Naive thymus-derived CD4-positive, alpha-beta T cell (primary cell): ENCODE measurements at regions of chr11 and their contacts with region 1.

Region 1: DNA sequence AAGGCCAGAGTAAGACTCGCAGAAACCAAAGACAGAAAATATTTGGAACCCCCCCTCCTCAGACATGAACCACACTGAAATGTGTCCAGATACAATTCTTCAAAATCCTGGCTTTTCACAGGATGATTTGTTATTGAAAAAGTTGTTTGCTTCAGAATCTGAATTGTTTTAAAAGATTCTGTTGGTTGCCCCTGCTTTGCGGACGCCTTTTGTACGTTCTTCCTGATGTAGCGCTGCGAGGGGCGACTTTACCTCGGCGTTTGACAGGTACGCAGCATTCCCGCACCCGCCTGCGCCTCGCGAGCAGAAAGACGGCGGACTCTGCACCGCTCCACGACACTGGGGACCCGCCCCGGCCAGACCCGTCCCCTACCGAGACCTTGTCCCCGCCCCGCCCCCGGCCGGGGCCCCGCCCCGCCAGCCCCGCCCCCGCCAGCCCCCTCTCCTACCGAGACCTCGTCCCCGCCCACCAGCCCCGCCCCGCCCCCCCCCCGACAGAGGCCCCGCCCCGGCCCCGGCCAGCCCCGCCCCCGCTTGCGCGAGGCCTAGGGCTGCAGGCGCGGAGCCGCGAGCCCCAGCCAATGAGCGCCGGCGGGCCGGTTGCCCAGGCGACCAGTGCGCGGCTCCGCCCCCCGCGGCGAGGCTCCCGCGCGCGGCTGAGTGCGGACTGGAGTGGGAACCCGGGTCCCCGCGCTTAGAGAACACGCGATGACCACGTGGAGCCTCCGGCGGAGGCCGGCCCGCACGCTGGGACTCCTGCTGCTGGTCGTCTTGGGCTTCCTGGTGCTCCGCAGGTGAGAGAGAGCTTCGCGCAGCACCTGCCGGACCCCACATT is at the start of gene GLB1L2:
- DNase-seq: peak; percentile 68 to 88 (median 78)
- ATAC-seq: peak; percentile 96
- H3K4me3 ChIP-seq: peak within 1 kb of the TSS; percentile 66
- H3K4me3 Mint-ChIP-seq: peak within 1 kb of the TSS; percentile 84 to 94 (median 88)
- H3K27ac ChIP-seq: no peak within 1 kb of the TSS
- H3K27ac Mint-ChIP-seq: peak within 1 kb of the TSS in 7 of 9 donors; percentile 25 to 89 (median 66)
- H3K4me1 ChIP-seq: peaks cover 7 to 9% of the 10 kb centered on the region in 2 donors
- H3K4me1 Mint-ChIP-seq: peaks cover 3 to 19% (median 17%) of the 10 kb centered on the region in 7 donors
- H3K27me3 ChIP-seq: no peaks in the 10 kb centered on the region
- H3K27me3 Mint-ChIP-seq: peaks cover 5 to 60% (median 9%) of the 10 kb centered on the region in 5 donors
- total RNA-seq, gene GLB1L2: 0.34 to 2.4 (median 1.7) TPM

Region 2: GRCh38 chr11:133956650-133957633 is 374.6 kb before region 1 on chr11 and contains the start of gene IGSF9B:
- CTCF ChIA-PET with region 1: no interaction called
- POLR2A ChIA-PET with region 1: no interaction called
- intact Hi-C with region 1: loop called in 1 of 2 experiments (anchors 5 kb)
- DNase-seq: peak; percentile 87 to 97 (median 92)
- ATAC-seq: peak; percentile 97
- H3K4me3 ChIP-seq: peak within 1 kb of the TSS; percentile 99
- H3K4me3 Mint-ChIP-seq: peak within 1 kb of the TSS; percentile 89 to 96 (median 92)
- H3K27ac ChIP-seq: peak within 1 kb of the TSS; percentile 75
- H3K27ac Mint-ChIP-seq: peak within 1 kb of the TSS; percentile 48 to 91 (median 88)
- H3K4me1 ChIP-seq: peaks cover 11 to 27% of the 10 kb centered on the region in 2 donors
- H3K4me1 Mint-ChIP-seq: peaks cover 29 to 52% (median 43%) of the 10 kb centered on the region in 7 donors
- H3K27me3 ChIP-seq: no peaks in the 10 kb centered on the region
- H3K27me3 Mint-ChIP-seq: peaks cover 7 to 24% (median 16%) of the 10 kb centered on the region in 5 donors
- total RNA-seq, gene IGSF9B: 17.6 to 155 (median 24.1) TPM

Region 3: DNA sequence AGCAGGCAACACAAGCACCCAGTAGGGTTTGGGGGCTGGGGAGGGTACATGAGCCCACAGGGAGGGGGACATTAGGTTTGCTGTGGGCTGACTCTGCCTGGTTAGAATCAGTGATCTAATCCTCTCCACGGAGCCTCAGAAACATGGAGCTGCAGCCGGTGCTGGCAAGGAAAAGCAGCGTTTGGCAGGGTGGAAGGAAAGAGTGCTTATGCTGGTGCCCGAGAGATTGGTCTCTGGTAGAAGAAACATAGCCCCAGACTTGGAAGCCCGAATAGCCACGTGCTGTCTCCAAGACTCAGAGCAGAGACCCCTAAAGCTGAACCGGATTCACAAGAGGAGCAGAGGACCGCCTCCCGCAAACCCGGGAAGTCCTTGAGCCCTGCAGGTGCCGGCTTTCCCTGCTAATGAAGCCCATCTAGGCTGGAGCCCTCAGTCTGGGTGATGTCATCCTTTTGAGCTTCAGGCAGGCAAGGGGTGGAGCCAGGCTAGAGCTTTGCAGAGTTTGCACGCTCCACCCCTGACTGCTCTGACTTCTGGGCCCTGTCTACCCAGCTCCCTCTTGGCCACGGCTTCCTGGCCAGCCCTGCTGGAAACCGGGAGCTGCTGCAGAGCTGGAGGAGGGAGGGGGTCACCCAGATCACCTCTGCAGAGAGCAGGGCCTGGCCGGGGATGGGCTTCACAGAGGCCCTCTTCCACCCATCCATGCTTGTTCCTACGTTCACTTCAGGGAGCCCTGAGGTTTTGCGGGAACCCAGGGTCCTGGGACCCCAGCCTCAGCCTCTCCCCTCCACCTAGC is 297.7 kb before region 1 on chr11:
- CTCF ChIA-PET with region 1: no interaction called
- POLR2A ChIA-PET with region 1: no interaction called
- intact Hi-C with region 1: loop called (anchors 2 to 5 kb)
- DNase-seq: peak in 8 of 9 donors; percentile 38 to 74 (median 60)
- ATAC-seq: peak; percentile 77
- H3K4me3 ChIP-seq: peak overlapping the region; percentile 25
- H3K4me3 Mint-ChIP-seq: peak overlapping the region; percentile 63 to 95 (median 75)
- H3K27ac ChIP-seq: peak overlapping the region; percentile 67
- H3K27ac Mint-ChIP-seq: peak overlapping the region; percentile 74 to 98 (median 85)
- H3K4me1 ChIP-seq: peaks cover 29 to 46% of the 10 kb centered on the region in 2 donors
- H3K4me1 Mint-ChIP-seq: peaks cover 33 to 79% (median 65%) of the 10 kb centered on the region in 7 donors
- H3K27me3 ChIP-seq: no peaks in the 10 kb centered on the region
- H3K27me3 Mint-ChIP-seq: peaks cover 0 to 24% (median 0%) of the 10 kb centered on the region in 5 donors

Region 4: DNA sequence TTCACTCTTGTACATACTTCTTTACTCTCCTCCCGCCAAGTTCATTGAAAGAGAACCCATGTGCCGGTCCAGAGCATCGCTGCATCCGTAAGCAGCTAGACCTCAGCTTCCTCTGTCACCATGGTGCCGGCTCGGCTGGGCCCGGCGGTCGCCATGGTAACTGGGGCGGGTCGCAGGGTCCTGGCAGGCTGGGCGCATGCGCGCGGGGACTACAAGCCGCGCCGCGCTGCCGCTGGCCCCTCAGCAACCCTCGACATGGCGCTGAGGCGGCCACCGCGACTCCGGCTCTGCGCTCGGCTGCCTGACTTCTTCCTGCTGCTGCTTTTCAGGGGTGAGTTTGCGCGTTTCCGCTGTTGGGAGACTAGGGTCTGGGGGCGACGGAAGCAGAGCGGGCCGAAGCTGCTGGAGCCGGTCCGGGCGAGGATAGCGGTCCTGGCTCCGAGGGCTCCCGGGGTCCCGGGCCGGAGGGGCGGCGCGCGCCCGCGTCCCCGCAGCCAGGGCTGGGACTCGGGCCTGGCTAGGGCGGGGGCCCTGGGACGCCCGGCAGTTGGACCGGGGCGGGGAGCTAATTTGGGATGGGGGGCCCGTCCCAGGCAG is 262.6 kb before region 1 on chr11 and contains the start of gene JAM3:
- CTCF ChIA-PET with region 1: no interaction called
- POLR2A ChIA-PET with region 1: no interaction called
- intact Hi-C with region 1: loop called in 1 of 2 experiments (anchors 2 kb)
- DNase-seq: peak; percentile 95 to 97 (median 96)
- ATAC-seq: peak; percentile 95
- H3K4me3 ChIP-seq: peak within 1 kb of the TSS; percentile 71
- H3K4me3 Mint-ChIP-seq: peak within 1 kb of the TSS; percentile 84 to 97 (median 92)
- H3K27ac ChIP-seq: peak within 1 kb of the TSS; percentile 71
- H3K27ac Mint-ChIP-seq: peak within 1 kb of the TSS; percentile 59 to 96 (median 89)
- H3K4me1 ChIP-seq: peaks cover 6% of the 10 kb centered on the region in 2 donors
- H3K4me1 Mint-ChIP-seq: peaks cover 5 to 22% (median 13%) of the 10 kb centered on the region in 7 donors
- H3K27me3 ChIP-seq: no peaks in the 10 kb centered on the region
- H3K27me3 Mint-ChIP-seq: peaks cover 0 to 80% (median 6%) of the 10 kb centered on the region in 5 donors
- total RNA-seq, gene JAM3: 4.8 to 8.2 (median 6.3) TPM

Region 5: DNA sequence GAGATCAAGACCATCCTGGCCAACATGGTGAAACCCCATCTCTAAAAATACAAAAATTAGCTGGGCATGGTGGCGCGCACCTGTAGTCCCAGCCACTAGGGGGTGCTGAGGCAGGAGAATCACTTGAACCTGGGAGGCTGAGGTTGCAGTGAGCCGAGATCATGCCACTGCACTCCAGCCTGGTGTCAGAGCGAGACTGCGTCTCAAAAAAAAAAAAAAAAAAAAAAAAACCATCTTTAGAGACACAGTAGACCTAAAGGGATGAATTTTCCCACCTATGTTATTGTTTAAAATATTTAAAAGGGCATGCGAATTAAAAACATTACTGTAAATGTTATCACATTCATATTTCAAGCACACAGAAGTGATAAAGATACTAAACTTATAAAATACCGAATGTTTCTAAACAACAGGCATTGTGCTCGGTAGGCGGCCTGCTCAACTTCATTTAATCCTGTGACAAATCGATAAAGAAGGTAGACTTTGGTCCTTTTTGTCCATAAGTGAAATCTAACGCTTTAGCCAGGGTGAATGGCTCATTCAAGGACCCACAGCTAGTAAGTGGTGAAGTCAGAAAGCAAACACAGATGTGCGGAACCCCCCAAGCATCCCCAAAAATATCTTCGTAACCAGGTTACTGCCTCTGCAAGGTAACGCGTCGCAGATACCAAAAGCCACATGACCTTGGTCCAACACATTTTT is 123.9 kb before region 1 on chr11:
- CTCF ChIA-PET with region 1: no interaction called
- POLR2A ChIA-PET with region 1: no interaction called
- intact Hi-C with region 1: loop called in 1 of 2 experiments (anchors 5 kb)
- DNase-seq: peak; percentile 36 to 67 (median 62)
- ATAC-seq: no peak
- H3K4me3 ChIP-seq: no peak overlapping the region
- H3K4me3 Mint-ChIP-seq: peak overlapping the region in 1 of 10 donors; percentile 34
- H3K27ac ChIP-seq: no peak overlapping the region
- H3K27ac Mint-ChIP-seq: no peak overlapping the region
- H3K4me1 ChIP-seq: no peaks in the 10 kb centered on the region
- H3K4me1 Mint-ChIP-seq: peaks cover 2 to 14% (median 7%) of the 10 kb centered on the region in 7 donors
- H3K27me3 ChIP-seq: no peaks in the 10 kb centered on the region
- H3K27me3 Mint-ChIP-seq: no peaks in the 10 kb centered on the region

Region 6: DNA sequence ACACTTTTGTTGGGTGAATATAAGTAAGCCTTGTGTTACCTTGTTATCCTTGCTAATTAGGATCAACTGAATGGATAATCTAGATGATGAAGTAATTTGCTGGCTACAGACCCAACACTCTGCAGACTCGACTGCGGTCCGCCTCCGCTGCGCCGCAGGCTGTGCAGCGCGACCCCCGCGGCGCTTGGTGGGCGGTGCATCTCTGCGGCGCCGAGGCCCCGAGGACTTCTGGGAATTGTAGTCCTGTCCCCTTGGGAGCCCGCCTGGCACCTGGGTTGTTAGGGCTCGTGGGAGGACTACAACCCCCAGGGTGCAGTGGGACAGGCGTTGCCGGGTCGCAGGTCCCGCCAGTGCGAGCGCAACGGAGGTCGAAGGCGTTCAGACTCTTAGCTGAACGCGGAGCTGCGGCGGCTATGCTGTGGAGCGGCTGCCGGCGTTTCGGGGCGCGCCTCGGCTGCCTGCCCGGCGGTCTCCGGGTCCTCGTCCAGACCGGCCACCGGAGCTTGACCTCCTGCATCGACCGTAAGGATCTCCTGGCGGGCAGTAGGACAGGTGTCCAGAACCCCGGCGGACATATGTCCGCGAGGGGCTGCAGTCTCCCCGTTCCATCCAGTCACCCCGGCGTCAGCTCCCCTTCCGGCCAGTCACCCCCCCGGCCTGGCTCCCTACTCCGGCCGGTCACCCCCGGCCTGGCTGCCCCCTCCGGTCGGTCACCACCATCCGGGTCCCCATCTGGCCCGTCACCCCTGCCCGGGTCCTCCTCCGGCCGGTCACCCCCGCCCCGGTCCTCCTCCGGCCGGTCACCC is 78.2 kb before region 1 on chr11 and contains the starts of genes ACAD8 and THYN1:
- CTCF ChIA-PET with region 1: no interaction called
- POLR2A ChIA-PET with region 1: no interaction called
- intact Hi-C with region 1: loop called (anchors 1 to 5 kb)
- DNase-seq: peak; percentile 82 to 98 (median 95)
- ATAC-seq: peak; percentile 100
- H3K4me3 ChIP-seq: peak within 1 kb of the TSS; percentile 89
- H3K4me3 Mint-ChIP-seq: peak within 1 kb of the TSS; percentile 79 to 99 (median 94)
- H3K27ac ChIP-seq: peak within 1 kb of the TSS; percentile 73
- H3K27ac Mint-ChIP-seq: peak within 1 kb of the TSS; percentile 75 to 92 (median 88)
- H3K4me1 ChIP-seq: peaks cover 16 to 18% of the 10 kb centered on the region in 2 donors
- H3K4me1 Mint-ChIP-seq: peaks cover 24 to 47% (median 40%) of the 10 kb centered on the region in 7 donors
- H3K27me3 ChIP-seq: no peaks in the 10 kb centered on the region
- H3K27me3 Mint-ChIP-seq: no peaks in the 10 kb centered on the region
- total RNA-seq, gene ACAD8: 18.5 to 40.2 (median 26.1) TPM
- total RNA-seq, gene THYN1: 34.4 to 67.7 (median 62.5) TPM

Region 7: DNA sequence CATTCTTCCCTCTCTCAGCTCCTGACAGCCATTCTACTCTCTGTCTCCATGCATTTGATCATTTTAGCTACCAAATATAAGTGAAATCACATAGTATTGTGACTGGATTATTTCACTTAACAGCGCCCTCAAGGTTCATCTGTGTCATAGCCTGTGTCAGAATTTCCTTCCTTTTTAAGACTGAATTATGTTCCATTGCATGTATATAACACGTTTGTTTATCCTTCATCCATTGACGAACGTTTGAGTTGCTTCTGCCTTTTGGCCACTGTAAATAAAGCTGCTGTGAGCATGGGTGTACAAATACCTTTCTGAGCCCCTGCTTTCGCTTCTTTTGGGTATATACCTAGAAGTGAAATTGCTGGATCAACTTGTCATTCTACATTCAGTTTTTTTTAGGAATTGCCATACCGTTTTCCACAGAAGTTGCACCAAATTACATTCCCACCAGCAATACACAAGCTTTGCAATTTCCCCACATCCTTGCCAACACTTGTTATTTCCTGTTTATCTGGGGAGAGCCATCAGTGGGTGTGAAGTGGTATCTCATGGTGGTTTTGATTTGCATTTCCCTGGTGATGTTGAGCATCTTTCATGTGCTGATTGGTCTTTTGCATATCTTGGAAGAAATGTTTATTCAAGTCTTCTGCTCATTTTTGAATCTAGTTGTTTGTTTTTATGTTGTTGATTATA is 17.7 kb after region 1 on chr11:
- CTCF ChIA-PET with region 1: no interaction called
- POLR2A ChIA-PET with region 1: no interaction called
- intact Hi-C with region 1: loop called in 1 of 2 experiments (anchors 1 kb)
- DNase-seq: no peak
- ATAC-seq: peak; percentile 64
- H3K4me3 ChIP-seq: no peak overlapping the region
- H3K4me3 Mint-ChIP-seq: peak overlapping the region in 1 of 10 donors; percentile 19
- H3K27ac ChIP-seq: no peak overlapping the region
- H3K27ac Mint-ChIP-seq: peak overlapping the region in 2 of 9 donors; percentile 14 to 83
- H3K4me1 ChIP-seq: peaks cover 4 to 16% of the 10 kb centered on the region in 2 donors
- H3K4me1 Mint-ChIP-seq: peaks cover 0 to 21% (median 7%) of the 10 kb centered on the region in 7 donors
- H3K27me3 ChIP-seq: no peaks in the 10 kb centered on the region
- H3K27me3 Mint-ChIP-seq: peaks cover 0 to 4% (median 0%) of the 10 kb centered on the region in 5 donors